ENCODE measurements at regions of chr11 and their contacts with region 1.

Region 1: DNA sequence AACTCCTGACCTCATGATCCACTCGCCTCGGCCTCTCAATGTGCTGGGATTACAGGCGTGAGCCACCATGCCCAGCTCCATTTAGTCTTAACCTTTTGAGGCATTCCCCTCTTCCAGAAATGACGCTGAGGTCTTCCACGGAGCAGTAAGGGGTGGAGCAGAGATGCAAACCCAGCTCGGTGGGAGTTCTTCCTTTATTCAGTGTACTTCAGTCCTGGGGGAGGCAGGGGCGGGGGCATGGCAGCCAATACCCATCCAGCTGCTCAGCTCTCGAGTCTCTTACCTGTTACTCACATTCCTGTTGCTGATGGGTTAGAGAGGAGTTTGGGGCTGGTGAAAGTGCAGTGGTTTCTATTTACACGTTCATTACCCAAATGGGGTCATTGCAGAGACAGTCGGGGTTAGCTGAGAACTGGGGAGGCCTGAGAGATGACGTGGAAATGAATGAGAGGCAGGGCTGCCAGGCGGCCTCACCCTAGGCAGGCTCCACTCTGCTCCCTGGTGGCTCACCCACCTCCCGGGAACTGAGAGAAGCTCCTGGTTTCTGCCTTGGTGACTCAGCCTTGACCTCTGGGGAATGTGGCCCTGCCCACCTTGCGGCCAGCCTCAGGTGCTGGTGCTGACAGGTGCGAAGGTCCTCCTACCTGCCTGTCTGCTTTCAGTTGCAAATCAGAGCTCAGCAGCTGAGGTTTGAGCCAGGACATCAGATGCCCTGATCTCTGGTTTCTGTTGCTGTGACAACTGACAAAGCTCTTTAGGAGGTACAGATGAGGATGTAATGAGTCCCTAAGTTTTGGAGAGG is 13.4 kb upstream of the ST14 start:
- DNase-seq: peak; percentile 90
- ATAC-seq: peak; percentile 99
- H3K4me3 Mint-ChIP-seq: peak overlapping the region; percentile 24
- H3K27ac Mint-ChIP-seq: peak overlapping the region; percentile 98
- H3K4me1 Mint-ChIP-seq: peaks cover 26% of the 10 kb centered on the region
- H3K27me3 Mint-ChIP-seq: no peaks in the 10 kb centered on the region
- CTCF ChIP-seq: no peak

Region 2: GRCh38 chr11:129895126-129896041 is 250.8 kb before region 1 on chr11 and contains the start of gene NFRKB:
- CTCF ChIA-PET with region 1: interaction called, 12 read pairs
- POLR2A ChIA-PET with region 1: no interaction called
- DNase-seq: peak; percentile 93
- ATAC-seq: peak; percentile 97
- H3K4me3 Mint-ChIP-seq: peak within 1 kb of the TSS; percentile 93
- H3K27ac Mint-ChIP-seq: peak within 1 kb of the TSS; percentile 96
- H3K4me1 Mint-ChIP-seq: peaks cover 24% of the 10 kb centered on the region
- H3K27me3 Mint-ChIP-seq: no peaks in the 10 kb centered on the region
- CTCF ChIP-seq: no peak
- total RNA-seq, gene NFRKB: 30.7 to 35.5 TPM (median 31.4 TPM) in 3 replicates

Region 3: DNA sequence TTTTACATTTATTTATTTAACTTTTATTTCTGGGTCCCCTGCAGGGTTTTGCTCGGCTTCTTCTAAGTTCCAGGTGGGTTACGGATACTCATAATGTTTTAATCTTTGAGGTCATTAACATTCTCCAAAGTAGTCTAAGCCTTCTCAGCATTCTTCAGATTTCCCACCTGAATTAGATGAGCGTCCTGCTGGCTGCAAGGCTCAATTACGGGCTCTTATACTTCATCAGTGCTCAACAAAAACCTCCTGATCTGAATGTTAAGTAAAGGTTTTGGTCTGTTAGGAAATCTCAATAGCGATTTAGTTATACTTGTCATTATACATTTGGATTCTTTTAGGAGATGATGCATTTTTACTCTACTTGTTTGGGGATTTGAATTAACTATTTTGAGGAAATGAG is 223.5 kb before region 1 on chr11:
- CTCF ChIA-PET with region 1: interaction called, 22 read pairs
- POLR2A ChIA-PET with region 1: no interaction called
- DNase-seq: no peak
- ATAC-seq: no peak
- H3K4me3 Mint-ChIP-seq: no peak overlapping the region
- H3K27ac Mint-ChIP-seq: no peak overlapping the region
- H3K4me1 Mint-ChIP-seq: peaks cover 15% of the 10 kb centered on the region
- H3K27me3 Mint-ChIP-seq: no peaks in the 10 kb centered on the region
- CTCF ChIP-seq: no peak

Region 4: DNA sequence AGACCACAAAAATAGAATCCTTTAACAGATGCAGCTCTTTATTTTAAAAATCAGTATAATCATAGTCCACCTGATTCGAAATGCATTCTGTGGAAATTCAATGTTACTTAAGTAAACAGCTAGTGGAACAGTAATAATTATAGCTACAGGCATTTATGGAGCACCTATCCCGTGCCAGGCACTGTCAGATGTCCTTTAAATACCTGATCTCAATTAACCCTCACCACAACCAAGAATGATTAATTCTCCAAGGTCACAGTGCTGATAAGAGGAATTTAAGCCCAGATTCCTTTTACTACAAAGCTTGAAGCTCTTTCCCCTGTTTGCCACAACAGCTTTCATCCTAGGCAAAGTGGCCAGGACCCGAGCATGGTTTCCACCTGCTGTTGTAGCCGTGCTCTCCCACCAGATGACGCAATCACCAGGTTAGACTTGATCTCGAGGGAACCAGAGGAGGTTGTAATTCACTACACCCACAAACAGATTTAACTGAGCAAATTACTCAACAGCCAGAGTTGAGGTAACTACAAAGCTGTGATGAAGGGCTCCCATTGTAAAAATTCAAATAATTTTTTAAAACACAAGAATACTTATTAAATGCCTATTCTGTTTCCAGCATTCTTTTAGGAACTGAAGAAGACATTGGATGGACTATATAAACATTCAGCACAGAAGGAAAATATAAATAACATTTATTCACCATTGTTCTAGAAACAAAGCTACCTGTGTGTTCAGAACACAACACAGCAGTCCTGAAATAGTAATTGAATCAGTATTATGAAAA is 153.8 kb before region 1 on chr11:
- CTCF ChIA-PET with region 1: interaction called, 20 read pairs
- POLR2A ChIA-PET with region 1: no interaction called
- DNase-seq: peak; percentile 66
- ATAC-seq: peak; percentile 89
- H3K4me3 Mint-ChIP-seq: no peak overlapping the region
- H3K27ac Mint-ChIP-seq: peak overlapping the region; percentile 63
- H3K4me1 Mint-ChIP-seq: peaks cover 19% of the 10 kb centered on the region
- H3K27me3 Mint-ChIP-seq: no peaks in the 10 kb centered on the region
- CTCF ChIP-seq: no peak

Measured in WTC11 (cell line).